AG04450 (cell line): ENCODE measurements at regions of chr2 and their contacts with region 1.

Region 1: DNA sequence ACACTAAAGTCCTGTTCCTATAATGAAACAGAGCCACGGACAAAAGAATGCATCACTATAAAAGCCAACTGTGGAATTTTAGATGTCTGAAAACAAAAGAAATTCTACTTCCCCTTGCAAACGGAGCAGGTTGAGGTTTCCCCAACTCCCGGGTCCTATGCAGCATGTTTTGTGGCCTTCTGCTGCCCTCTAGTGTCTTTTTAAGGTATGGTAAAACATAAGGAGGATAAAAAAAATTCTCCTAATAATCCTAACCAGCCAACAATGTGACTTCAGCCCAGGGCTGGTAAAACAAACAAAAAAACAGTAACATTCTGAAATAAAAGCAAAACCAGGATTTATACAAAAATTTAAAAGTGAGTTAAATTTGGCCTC is 539.5 kb downstream of the NRXN1 start:
- DNase-seq: peak; percentile 16
- H3K4me3 ChIP-seq: no peak overlapping the region
- H3K27ac ChIP-seq: no peak overlapping the region
- H3K27me3 ChIP-seq: no peaks in the 10 kb centered on the region
- CTCF ChIP-seq: peak; percentile 80

Region 2: GRCh38 chr2:50084086-50084843 is 408.2 kb before region 1 on chr2:
- CTCF ChIA-PET with region 1: no interaction called
- POLR2A ChIA-PET with region 1: no interaction called
- DNase-seq: no peak
- H3K4me3 ChIP-seq: no peak overlapping the region
- H3K27ac ChIP-seq: no peak overlapping the region
- H3K27me3 ChIP-seq: no peaks in the 10 kb centered on the region
- CTCF ChIP-seq: no peak

Region 3: GRCh38 chr2:50476174-50476573 is 16.3 kb before region 1 on chr2:
- CTCF ChIA-PET with region 1: interaction called, 49 read pairs
- POLR2A ChIA-PET with region 1: no interaction called
- DNase-seq: no peak
- H3K4me3 ChIP-seq: no peak overlapping the region
- H3K27ac ChIP-seq: no peak overlapping the region
- H3K27me3 ChIP-seq: no peaks in the 10 kb centered on the region
- CTCF ChIP-seq: peak; percentile 11; the same call in 1 of the 2 replicates